AG04450 (cell line): ENCODE measurements at regions of chr15 and their contacts with region 1.

Region 1: GRCh38 chr15:66841953-66842681 is 140.1 kb downstream of the SMAD6 start:
- DNase-seq: peak; percentile 68
- H3K4me3 ChIP-seq: peak overlapping the region; percentile 62
- H3K27ac ChIP-seq: peak overlapping the region; percentile 98
- H3K27me3 ChIP-seq: no peaks in the 10 kb centered on the region
- CTCF ChIP-seq: no peak

Region 2: DNA sequence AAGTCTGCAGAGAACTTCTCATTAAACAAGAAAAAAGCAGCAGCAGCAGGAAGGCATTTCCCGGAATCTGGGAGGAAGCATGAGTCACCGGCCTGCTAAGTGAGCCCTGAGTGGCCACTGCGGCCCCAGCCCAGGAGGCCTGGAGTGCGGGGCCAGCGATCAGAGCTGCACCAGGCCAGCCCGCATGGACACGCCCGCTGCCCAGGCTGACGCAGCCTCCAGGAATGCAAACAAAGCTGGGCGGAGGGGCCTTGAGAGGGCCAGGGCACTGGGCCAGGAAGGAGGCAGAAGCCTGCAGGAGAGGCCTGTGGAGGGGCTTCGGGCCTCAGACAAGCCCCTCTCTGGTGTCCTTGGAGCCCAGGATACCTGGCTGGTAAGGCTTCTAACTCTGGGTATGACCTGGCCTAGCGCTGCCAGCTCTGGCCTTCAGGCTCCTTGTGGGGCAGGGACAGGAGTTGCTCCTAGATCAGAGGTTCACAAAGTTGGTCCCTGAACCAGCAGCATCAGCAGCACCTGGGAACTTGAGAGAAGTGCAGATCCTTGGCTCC is 38.9 kb before region 1 on chr15:
- CTCF ChIA-PET with region 1: no interaction called
- POLR2A ChIA-PET with region 1: interaction called, 11 read pairs
- DNase-seq: peak; percentile 97
- H3K4me3 ChIP-seq: peak overlapping the region; percentile 12; the same call in 1 of the 2 replicates
- H3K27ac ChIP-seq: peak overlapping the region; percentile 99
- H3K27me3 ChIP-seq: no peaks in the 10 kb centered on the region
- CTCF ChIP-seq: no peak